Activated T-helper 1 cell treated with anti-CD3 and anti-CD28 coated beads, Interleukin-12 subunit alpha, Interleukin-12 subunit beta, Interleukin-2, Interleukin-4 antibody, amounts not matched to agents 30 ng/mL and 10 ng/mL and 1 ng/mL, durations not matched to agents 14 hours and 24 hours and 36 hours (primary cell): ENCODE measurements at regions of chr5 and their contacts with region 1.

Region 1: GRCh38 chr5:91332267-91333045 is 50.7 kb downstream of the ARRDC3 start:
- DNase-seq: no peak
- H3K4me3 Mint-ChIP-seq: no peak overlapping the region
- H3K27ac Mint-ChIP-seq: peak overlapping the region; percentile 37
- H3K4me1 Mint-ChIP-seq: peaks cover 33% of the 10 kb centered on the region
- H3K27me3 Mint-ChIP-seq: peaks cover 11% of the 10 kb centered on the region

Region 2: DNA sequence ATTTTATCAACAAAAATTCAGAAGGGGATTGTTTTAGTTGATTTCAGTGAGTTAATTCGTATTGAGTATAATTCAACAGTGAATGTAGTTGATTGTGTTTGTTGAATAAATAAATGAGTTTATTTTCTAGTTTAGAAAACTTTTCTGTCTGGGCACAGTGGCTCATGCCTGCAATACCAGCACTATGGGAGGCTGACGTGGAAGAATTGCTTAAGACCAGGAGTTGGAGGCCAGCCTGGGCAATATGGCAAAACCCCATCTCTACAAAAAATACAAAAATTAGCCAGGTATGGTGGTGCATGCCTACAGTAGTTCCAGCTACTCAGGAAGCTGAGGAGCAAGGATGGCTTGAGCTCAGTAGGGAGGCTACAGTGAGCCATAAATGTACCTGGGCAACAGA is 45.3 kb before region 1 on chr5:
- intact Hi-C with region 1: no loop called
- DNase-seq: no peak
- H3K4me3 Mint-ChIP-seq: no peak overlapping the region
- H3K27ac Mint-ChIP-seq: no peak overlapping the region
- H3K4me1 Mint-ChIP-seq: peaks cover 21% of the 10 kb centered on the region
- H3K27me3 Mint-ChIP-seq: no peaks in the 10 kb centered on the region

Region 3: DNA sequence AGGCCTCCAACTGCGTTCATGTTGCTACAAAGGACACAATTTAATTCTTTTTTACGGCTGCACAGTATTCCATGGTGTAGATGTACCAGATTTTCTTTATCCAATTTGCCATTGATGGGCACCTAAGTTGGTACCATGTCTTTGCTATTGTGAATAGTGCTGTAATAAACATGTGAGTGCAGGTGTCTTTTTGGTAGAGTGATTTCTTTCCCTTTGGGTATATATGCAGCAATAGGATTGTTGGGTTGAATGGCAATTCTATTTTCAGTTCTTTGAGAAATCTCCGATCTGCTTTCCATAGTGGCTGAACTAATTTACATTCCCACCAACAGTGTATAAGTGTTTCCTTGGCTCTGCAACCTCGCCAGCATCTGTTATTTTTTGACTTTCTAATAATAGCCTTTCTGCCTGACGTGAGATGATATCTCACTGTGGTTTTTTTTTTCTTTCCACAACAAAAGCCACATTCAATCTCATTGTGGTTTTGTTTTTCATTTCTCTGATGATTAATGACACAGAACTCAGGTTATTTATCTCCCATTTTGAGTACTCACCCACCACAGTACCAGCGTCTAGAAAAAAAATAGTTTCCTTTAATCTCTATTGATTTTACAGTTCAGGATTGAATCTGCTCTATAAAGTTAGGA is 28.7 kb after region 1 on chr5:
- intact Hi-C with region 1: loop called (anchors 1 kb)
- DNase-seq: no peak
- H3K4me3 Mint-ChIP-seq: no peak overlapping the region
- H3K27ac Mint-ChIP-seq: peak overlapping the region; percentile 67
- H3K4me1 Mint-ChIP-seq: peaks cover 14% of the 10 kb centered on the region
- H3K27me3 Mint-ChIP-seq: peaks cover 23% of the 10 kb centered on the region